ENCODE measurements at regions of chr3 and their contacts with region 1.

Region 1: GRCh38 chr3:67654099-67654843 is at the start of gene SUCLG2:
- DNase-seq: peak; percentile 94 to 96 (median 95)
- ATAC-seq: peak; percentile 98 to 99 (median 99)
- H3K4me3 ChIP-seq: peak within 1 kb of the TSS; percentile 70 to 97 (median 88)
- H3K27ac ChIP-seq: peak within 1 kb of the TSS; percentile 91 to 98 (median 96)
- H3K4me1 ChIP-seq: peaks cover 0 to 34% (median 12%) of the 10 kb centered on the region in 12 donors
- H3K27me3 ChIP-seq: no peaks in the 10 kb centered on the region
- CTCF ChIP-seq: no peak
- POLR2A ChIP-seq: peak in 1 of 2 donors; percentile 80
- total RNA-seq, gene SUCLG2: 64.0 to 119 (median 83.9) TPM

Region 2: DNA sequence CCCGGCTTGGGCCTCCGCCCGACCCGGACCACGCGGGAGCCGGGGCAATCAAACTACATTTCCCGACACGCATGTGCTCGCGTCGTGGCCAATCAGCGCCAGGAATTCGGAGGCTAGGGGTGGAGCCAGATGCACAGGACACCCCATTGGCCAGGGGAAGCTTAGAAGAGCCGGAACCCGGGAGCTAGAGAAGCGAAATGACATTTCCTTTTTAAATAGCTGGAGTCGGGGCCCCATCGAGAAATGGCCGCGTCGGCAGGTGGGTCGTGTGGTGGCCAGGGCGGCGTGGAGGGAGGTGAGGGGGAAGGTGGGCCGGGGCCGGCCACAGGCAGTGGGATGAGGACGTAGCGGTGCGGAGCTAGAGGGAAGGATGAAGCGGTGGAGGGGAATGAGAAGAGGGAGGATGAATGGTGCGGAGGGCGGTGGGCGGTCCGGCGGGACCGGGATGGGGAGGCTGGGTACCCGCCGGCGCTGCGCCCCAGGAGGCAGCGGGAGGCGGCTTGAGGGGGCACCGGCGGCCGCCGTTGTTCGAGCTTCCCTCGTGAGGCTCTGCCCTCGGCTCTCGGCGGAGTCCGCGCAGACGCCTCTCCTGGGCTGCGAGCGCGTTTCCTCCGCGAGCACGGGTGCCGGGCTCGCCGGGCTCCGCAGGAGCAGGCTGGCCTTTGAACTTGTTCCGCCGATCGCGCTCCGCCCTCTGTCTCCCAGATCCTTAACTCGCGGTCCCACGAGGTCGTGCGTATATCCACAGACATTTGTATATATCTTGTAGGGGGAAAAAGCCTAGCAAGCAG is 656.0 kb before region 1 on chr3 and contains the start of gene KBTBD8:
- intact Hi-C with region 1: loop called in 1 of 10 experiments (anchors 10 kb)
- DNase-seq: peak; percentile 98 to 99 (median 99)
- ATAC-seq: peak in 3 of 4 donors; percentile 98 to 100 (median 100)
- H3K4me3 ChIP-seq: peak within 1 kb of the TSS; percentile 58 to 94 (median 84)
- H3K27ac ChIP-seq: peak within 1 kb of the TSS; percentile 16 to 87 (median 78)
- H3K4me1 ChIP-seq: peaks cover 0 to 36% (median 8%) of the 10 kb centered on the region in 12 donors
- H3K27me3 ChIP-seq: peaks cover 0 to 14% (median 0%) of the 10 kb centered on the region in 9 donors
- CTCF ChIP-seq: no peak
- POLR2A ChIP-seq: peak in 1 of 2 donors; percentile 71
- total RNA-seq, gene KBTBD8: 2.4 to 9.0 (median 6.4) TPM

Region 3: DNA sequence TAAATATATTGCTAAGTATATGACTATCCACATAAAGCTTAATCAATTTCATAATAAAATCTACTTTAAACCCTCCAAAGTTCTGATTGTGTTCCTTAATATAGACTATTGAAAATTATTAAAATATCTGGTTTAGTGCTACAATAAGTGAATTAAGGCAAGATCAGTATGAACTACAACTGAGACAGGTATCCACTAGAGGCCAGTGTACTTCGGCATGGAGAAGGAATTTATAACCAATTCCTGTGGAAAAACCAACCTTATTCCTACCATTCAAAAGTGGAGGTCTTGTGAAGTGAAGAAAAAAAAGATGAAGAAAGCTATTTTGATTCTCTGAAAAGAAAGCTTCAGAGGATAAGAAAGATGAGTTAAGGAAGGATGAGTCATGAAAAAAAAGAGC is 237.6 kb before region 1 on chr3:
- intact Hi-C with region 1: loop called in 1 of 10 experiments (anchors 10 kb)
- DNase-seq: no peak
- ATAC-seq: no peak
- H3K4me3 ChIP-seq: no peak overlapping the region
- H3K27ac ChIP-seq: no peak overlapping the region
- H3K4me1 ChIP-seq: peaks cover 0 to 14% (median 3%) of the 10 kb centered on the region in 12 donors
- H3K27me3 ChIP-seq: no peaks in the 10 kb centered on the region
- CTCF ChIP-seq: peak in 1 of 12 donors; percentile 6
- POLR2A ChIP-seq: no peak

Region 4: DNA sequence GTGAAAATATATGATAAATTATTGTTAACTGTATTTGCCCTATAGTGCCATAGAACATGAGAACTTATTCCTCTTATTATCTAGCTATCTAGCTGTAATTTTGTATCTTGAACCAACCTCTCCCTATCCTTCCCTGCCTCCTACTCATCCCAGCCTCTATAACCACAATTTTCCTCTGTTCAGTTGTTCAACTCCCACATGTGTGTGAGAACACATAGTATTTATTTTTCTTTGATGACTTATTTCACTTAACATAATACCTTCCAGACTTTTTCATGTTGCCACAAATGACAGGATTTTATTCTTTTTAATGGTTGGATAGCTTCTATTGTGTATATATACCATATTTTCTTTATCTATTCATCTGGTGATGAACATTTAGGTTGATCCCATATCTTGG is 85.6 kb after region 1 on chr3:
- intact Hi-C with region 1: no loop called
- DNase-seq: no peak
- ATAC-seq: no peak
- H3K4me3 ChIP-seq: no peak overlapping the region
- H3K27ac ChIP-seq: no peak overlapping the region
- H3K4me1 ChIP-seq: no peaks in the 10 kb centered on the region
- H3K27me3 ChIP-seq: no peaks in the 10 kb centered on the region
- CTCF ChIP-seq: no peak
- POLR2A ChIP-seq: no peak

Region 5: DNA sequence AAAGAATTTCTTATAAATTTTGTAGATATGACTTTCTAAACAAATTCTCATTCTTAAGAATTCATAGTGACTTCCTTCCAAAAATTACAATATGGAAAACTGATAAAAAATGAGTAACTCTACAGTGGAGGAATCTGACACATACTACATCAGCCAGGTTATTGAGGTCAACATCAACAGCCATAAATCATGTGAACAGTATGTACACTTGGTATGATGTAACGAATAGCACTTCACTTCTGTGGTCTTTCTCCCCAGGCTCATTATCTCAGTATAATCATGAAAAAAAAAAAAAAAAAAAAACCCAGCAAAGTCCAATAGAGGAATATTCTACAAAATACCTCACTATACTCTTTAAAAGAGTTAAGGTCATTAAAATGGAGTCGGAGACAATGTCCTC is 111.3 kb after region 1 on chr3:
- intact Hi-C with region 1: no loop called
- DNase-seq: no peak
- ATAC-seq: no peak
- H3K4me3 ChIP-seq: no peak overlapping the region
- H3K27ac ChIP-seq: no peak overlapping the region
- H3K4me1 ChIP-seq: no peaks in the 10 kb centered on the region
- H3K27me3 ChIP-seq: no peaks in the 10 kb centered on the region
- CTCF ChIP-seq: no peak
- POLR2A ChIP-seq: no peak